Breast epithelium (tissue), 4 donors: ENCODE measurements at regions of chr3 and their contacts with region 1.

Region 1: DNA sequence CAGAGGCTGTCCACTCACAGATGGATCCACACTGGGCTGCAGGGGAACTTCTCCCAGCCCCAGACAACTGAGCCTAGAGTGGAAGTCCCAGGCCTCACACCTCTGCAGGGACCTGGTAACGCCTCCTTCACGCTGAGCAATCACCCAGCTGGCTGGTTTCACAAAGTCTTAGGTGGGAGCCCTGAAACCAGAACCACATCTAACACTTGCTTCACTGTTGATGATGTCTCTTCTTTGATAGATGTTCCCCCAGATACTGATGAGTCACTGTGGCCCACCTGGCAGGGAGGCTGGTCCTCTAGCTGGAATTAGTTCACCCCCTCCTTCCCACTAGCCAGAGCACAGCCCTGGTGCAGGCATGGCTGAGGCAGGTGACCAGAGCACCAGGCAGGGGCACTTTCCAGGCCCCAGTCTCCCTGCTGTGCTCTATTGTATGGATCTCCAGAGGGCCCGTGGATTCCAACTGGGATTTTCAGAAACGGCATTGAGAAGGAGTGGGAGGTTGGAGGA is 33.5 kb downstream of the MYL3 start:
- DNase-seq: no peak
- H3K4me3 ChIP-seq: no peak overlapping the region
- H3K27ac ChIP-seq: no peak overlapping the region
- H3K4me1 ChIP-seq: no peaks in the 10 kb centered on the region
- H3K27me3 ChIP-seq: no peaks in the 10 kb centered on the region
- CTCF ChIP-seq: no peak
- POLR2A ChIP-seq: no peak

Region 2: GRCh38 chr3:47149339-47149933 is 319.7 kb after region 1 on chr3:
- intact Hi-C with region 1: loop called (anchors 5 kb)
- DNase-seq: no peak
- H3K4me3 ChIP-seq: no peak overlapping the region
- H3K27ac ChIP-seq: no peak overlapping the region
- H3K4me1 ChIP-seq: no peaks in the 10 kb centered on the region
- H3K27me3 ChIP-seq: no peaks in the 10 kb centered on the region
- CTCF ChIP-seq: no peak
- POLR2A ChIP-seq: no peak

Region 3: DNA sequence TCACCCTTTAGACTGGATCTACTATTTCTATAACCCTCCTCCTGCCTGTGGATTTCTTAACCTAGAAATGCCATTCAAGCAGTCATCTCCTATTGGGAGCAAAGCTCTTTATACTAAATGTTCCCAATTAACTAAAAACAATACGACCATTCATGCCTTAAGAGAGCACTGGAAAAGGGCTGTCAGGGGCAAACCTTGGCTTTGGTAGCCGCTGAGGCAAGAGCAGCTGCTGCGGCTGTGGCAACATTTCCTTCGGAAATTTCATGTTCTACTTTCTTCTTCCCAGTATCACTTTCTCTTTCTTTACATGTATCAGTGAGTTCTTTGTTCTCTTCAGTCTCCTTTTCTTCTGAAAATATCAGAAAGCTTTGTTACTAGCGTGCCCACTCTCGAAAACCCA is 805.2 kb after region 1 on chr3:
- intact Hi-C with region 1: no loop called
- DNase-seq: no peak
- H3K4me3 ChIP-seq: no peak overlapping the region
- H3K27ac ChIP-seq: no peak overlapping the region
- H3K4me1 ChIP-seq: no peaks in the 10 kb centered on the region
- H3K27me3 ChIP-seq: no peaks in the 10 kb centered on the region
- CTCF ChIP-seq: no peak
- POLR2A ChIP-seq: no peak

Region 4: GRCh38 chr3:48064292-48064829 is 1234.6 kb after region 1 on chr3:
- intact Hi-C with region 1: no loop called
- DNase-seq: no peak
- H3K4me3 ChIP-seq: no peak overlapping the region
- H3K27ac ChIP-seq: no peak overlapping the region
- H3K4me1 ChIP-seq: no peaks in the 10 kb centered on the region
- H3K27me3 ChIP-seq: no peaks in the 10 kb centered on the region
- CTCF ChIP-seq: no peak
- POLR2A ChIP-seq: no peak